PC-3 (cell line): ENCODE measurements at regions of chr9 and their contacts with region 1.

Region 1: GRCh38 chr9:21102305-21102704 is 24.6 kb upstream of the IFNB1 start:
- DNase-seq: no peak
- ATAC-seq: no peak
- H3K4me3 ChIP-seq: no peak overlapping the region
- H3K27ac ChIP-seq: no peak overlapping the region
- H3K4me1 ChIP-seq: no peaks in the 10 kb centered on the region
- H3K27me3 ChIP-seq: no peaks in the 10 kb centered on the region
- CTCF ChIP-seq: no peak

Region 2: DNA sequence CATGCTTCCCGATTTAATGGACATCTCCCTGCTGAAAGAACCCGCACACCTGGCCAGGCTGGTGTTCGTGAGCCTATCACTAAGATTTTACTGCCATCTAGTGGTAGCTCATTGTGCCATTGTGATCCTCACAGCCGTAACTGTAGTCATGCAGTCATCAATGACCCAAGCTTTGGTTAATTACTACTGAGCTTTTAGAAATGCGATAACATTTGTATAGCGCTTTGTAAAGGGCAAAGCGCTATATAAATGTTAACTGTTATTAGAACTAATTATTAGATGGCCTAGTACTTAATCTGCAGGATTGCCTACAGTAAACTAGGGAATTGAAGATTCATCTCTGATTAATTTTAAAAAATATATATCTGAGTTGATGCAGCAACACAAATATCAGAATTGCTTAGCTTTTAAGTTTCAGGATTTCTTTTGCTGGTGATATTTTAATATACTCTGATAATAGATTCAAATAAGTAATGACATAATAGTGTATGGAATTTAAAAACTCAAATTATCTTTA is 161.1 kb before region 1 on chr9:
- CTCF ChIA-PET with region 1: no interaction called
- POLR2A ChIA-PET with region 1: no interaction called
- intact Hi-C with region 1: loop called (anchors 10 kb)
- DNase-seq: peak; percentile 79
- ATAC-seq: peak; percentile 98
- H3K4me3 ChIP-seq: no peak overlapping the region
- H3K27ac ChIP-seq: no peak overlapping the region
- H3K4me1 ChIP-seq: no peaks in the 10 kb centered on the region
- H3K27me3 ChIP-seq: no peaks in the 10 kb centered on the region
- CTCF ChIP-seq: peak; percentile 82

Region 3: GRCh38 chr9:20989923-20990341 is 112.4 kb before region 1 on chr9:
- CTCF ChIA-PET with region 1: no interaction called
- POLR2A ChIA-PET with region 1: no interaction called
- intact Hi-C with region 1: loop called (anchors 5 kb)
- DNase-seq: no peak
- ATAC-seq: no peak
- H3K4me3 ChIP-seq: no peak overlapping the region
- H3K27ac ChIP-seq: no peak overlapping the region
- H3K4me1 ChIP-seq: peaks cover 41% of the 10 kb centered on the region
- H3K27me3 ChIP-seq: no peaks in the 10 kb centered on the region
- CTCF ChIP-seq: no peak

Region 4: DNA sequence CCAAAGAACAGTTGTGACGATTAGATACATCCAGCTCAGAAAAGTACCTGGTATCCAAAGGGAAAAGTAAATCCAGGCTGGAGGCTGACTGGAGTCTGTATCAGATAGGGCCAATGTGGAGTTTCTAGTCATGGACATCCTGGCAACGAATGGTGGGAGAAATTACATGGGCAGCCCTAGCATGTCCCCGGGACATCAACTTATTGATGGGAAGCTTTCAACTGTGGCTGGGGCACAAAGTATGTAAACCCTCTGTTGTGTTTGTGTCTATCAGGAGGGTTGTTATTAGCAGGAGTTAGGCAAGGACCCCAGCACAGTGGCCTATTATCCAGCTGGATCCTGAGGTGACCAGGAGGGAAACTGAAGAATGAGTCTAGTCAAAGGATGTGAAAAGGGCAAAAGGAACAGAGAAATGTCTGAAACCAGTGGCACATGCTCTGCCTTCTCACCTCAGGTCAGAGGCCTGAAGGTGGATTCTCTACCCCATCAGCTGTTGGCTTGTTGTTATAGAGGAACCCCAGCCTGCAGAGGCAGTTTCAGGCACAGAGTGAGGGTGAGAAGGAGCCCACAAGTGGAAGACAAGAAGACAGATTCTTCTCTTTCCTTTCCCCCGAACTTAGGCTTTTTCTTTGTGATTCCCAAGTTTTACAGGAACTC is 19.4 kb after region 1 on chr9:
- CTCF ChIA-PET with region 1: no interaction called
- POLR2A ChIA-PET with region 1: no interaction called
- intact Hi-C with region 1: no loop called
- DNase-seq: no peak
- ATAC-seq: no peak
- H3K4me3 ChIP-seq: no peak overlapping the region
- H3K27ac ChIP-seq: no peak overlapping the region
- H3K4me1 ChIP-seq: no peaks in the 10 kb centered on the region
- H3K27me3 ChIP-seq: peaks cover 37% of the 10 kb centered on the region
- CTCF ChIP-seq: no peak

Region 5: GRCh38 chr9:21395778-21396717 is 293.7 kb after region 1 on chr9:
- CTCF ChIA-PET with region 1: no interaction called
- POLR2A ChIA-PET with region 1: no interaction called
- intact Hi-C with region 1: no loop called
- DNase-seq: peak; percentile 43
- ATAC-seq: peak; percentile 84
- H3K4me3 ChIP-seq: peak overlapping the region; percentile 76
- H3K27ac ChIP-seq: no peak overlapping the region
- H3K4me1 ChIP-seq: 0 out of 2 replicates have a peak, but pooled peaks cover 5% of the 10 kb centered on the region
- H3K27me3 ChIP-seq: peaks cover 3% of the 10 kb centered on the region; the same call in 1 of the 2 replicates
- CTCF ChIP-seq: peak; percentile 90

Region 6: DNA sequence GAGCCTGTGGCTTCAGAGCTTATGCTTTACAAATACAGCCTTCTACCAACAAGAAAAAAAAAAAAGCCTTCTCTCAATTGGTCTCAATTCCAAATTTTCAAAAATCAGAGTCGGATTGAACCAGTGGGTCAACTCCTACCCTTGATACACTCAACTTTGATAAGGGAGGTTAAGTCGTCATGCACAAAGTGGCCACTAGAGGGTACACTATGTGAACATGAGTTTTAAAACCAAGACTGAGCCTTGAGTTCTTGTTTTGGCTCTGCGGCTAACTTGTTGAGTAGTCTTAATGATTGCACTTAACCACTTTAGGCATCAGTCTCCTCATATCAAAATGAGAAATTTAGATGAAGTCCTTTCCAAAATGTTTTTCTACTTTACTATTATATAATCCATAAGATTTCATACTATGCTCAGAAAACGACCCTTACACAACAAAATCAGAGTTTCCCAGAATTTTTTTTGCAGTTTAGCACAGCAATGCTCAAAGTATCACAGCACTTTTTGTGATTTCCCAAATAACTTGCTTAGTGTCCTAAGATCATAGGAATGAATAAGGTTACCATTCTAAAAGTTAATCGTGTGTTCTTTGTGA is 607.3 kb after region 1 on chr9:
- CTCF ChIA-PET with region 1: no interaction called
- POLR2A ChIA-PET with region 1: no interaction called
- intact Hi-C with region 1: no loop called
- DNase-seq: peak; percentile 73
- ATAC-seq: no peak
- H3K4me3 ChIP-seq: no peak overlapping the region
- H3K27ac ChIP-seq: no peak overlapping the region
- H3K4me1 ChIP-seq: peaks cover 11% of the 10 kb centered on the region; the same call in 1 of the 2 replicates
- H3K27me3 ChIP-seq: no peaks in the 10 kb centered on the region
- CTCF ChIP-seq: peak; percentile 84